Activated CD8-positive, alpha-beta T cell treated with anti-CD3 and anti-CD28 coated beads, Interleukin-2, amount 10 ng/mL, durations not matched to agents 7 days and 5 days (primary cell): ENCODE measurements at regions of chr15 and their contacts with region 1.

Region 1: GRCh38 chr15:91706322-91707032 is 147.0 kb upstream of the SLCO3A1 start:
- DNase-seq: peak; percentile 95
- ATAC-seq: peak; percentile 100
- H3K4me3 Mint-ChIP-seq: peak overlapping the region; percentile 56
- H3K27ac Mint-ChIP-seq: peak overlapping the region; percentile 85
- H3K4me1 Mint-ChIP-seq: peaks cover 35% of the 10 kb centered on the region
- H3K27me3 Mint-ChIP-seq: peaks cover 18% of the 10 kb centered on the region

Region 2: GRCh38 chr15:91311986-91312385 is 394.5 kb before region 1 on chr15:
- CTCF ChIA-PET with region 1: interaction called, 13 read pairs
- POLR2A ChIA-PET with region 1: no interaction called
- DNase-seq: peak; percentile 74
- ATAC-seq: peak; percentile 77
- H3K4me3 Mint-ChIP-seq: peak overlapping the region; percentile 54
- H3K27ac Mint-ChIP-seq: peak overlapping the region; percentile 77
- H3K4me1 Mint-ChIP-seq: peaks cover 80% of the 10 kb centered on the region
- H3K27me3 Mint-ChIP-seq: peaks cover 3% of the 10 kb centered on the region

Region 3: GRCh38 chr15:91694831-91695210 is 11.7 kb before region 1 on chr15:
- CTCF ChIA-PET with region 1: interaction called, 23 read pairs
- POLR2A ChIA-PET with region 1: no interaction called
- DNase-seq: no peak
- ATAC-seq: no peak
- H3K4me3 Mint-ChIP-seq: no peak overlapping the region
- H3K27ac Mint-ChIP-seq: no peak overlapping the region
- H3K4me1 Mint-ChIP-seq: no peaks in the 10 kb centered on the region
- H3K27me3 Mint-ChIP-seq: peaks cover 4% of the 10 kb centered on the region

Region 4: DNA sequence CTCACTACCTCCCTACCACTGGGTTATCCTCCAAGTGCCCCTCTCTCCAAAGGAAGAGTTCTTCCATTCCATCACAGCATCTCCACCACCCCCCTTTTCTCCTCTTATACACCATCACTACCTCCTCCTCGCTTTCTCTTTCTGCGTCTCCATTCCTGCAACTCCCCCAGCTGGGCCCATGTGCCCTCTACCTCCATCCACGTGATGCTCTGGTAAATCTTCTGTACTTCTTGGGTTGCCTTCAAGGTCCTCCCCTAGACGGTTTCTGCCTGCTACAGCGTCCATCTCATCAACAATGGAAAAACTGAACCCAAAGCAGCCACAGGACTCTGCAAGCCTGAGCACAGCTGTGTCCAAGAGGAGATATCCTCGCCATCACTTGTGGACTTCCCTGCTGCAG is 17.5 kb after region 1 on chr15:
- CTCF ChIA-PET with region 1: interaction called, 21 read pairs
- POLR2A ChIA-PET with region 1: no interaction called
- DNase-seq: no peak
- ATAC-seq: no peak
- H3K4me3 Mint-ChIP-seq: no peak overlapping the region
- H3K27ac Mint-ChIP-seq: no peak overlapping the region
- H3K4me1 Mint-ChIP-seq: no peaks in the 10 kb centered on the region
- H3K27me3 Mint-ChIP-seq: peaks cover 32% of the 10 kb centered on the region

Region 5: DNA sequence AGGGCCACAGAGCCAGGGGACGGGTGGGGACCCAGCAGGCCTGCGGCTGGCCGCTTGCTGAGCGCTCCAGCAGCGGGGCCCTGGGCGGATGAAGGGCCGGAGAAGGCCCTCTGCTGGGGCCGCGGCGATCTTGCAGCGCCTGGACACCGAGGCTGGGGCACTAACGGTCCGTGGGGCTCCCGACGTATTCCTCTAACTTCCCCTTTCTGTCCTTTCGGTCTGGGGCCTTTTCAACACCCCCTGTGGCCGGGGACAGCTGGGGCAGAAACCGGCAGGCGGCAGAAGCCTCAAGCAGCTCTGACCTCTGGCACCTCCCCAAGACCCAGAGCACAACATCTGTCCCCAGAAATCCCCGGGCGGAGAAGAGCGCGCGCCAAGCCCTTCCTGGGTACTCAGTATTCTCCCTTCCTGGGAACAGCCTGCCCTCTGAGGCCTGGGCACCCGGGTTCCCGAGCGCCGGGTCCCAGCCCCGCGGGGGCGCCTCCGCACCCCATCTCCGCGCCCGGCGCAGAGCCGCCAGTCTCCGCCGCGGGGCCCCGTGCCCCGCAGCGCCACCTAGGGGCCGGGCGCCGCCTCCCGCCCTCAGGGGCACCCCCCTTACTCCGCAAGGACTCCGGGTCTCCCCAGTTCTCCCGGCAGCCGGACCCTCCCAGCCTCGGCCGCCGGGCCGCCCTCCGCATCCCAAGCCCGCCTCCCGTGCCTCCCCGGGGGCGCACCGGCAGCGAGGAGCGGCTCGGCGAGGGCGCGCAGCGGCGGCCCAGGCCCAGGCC is 146.4 kb after region 1 on chr15:
- CTCF ChIA-PET with region 1: interaction called, 30 read pairs
- POLR2A ChIA-PET with region 1: no interaction called
- DNase-seq: peak; percentile 74
- ATAC-seq: peak; percentile 80
- H3K4me3 Mint-ChIP-seq: peak overlapping the region; percentile 81
- H3K27ac Mint-ChIP-seq: peak overlapping the region; percentile 76
- H3K4me1 Mint-ChIP-seq: peaks cover 58% of the 10 kb centered on the region
- H3K27me3 Mint-ChIP-seq: peaks cover 10% of the 10 kb centered on the region

Region 6: GRCh38 chr15:92077353-92078085 is 371.0 kb after region 1 on chr15:
- CTCF ChIA-PET with region 1: interaction called, 23 read pairs
- POLR2A ChIA-PET with region 1: interaction called, 3 read pairs
- DNase-seq: peak; percentile 75
- ATAC-seq: peak; percentile 75
- H3K4me3 Mint-ChIP-seq: no peak overlapping the region
- H3K27ac Mint-ChIP-seq: no peak overlapping the region
- H3K4me1 Mint-ChIP-seq: peaks cover 33% of the 10 kb centered on the region
- H3K27me3 Mint-ChIP-seq: no peaks in the 10 kb centered on the region